IMR-90 (cell line): ENCODE measurements at regions of chr16 and their contacts with region 1.

Region 1: DNA sequence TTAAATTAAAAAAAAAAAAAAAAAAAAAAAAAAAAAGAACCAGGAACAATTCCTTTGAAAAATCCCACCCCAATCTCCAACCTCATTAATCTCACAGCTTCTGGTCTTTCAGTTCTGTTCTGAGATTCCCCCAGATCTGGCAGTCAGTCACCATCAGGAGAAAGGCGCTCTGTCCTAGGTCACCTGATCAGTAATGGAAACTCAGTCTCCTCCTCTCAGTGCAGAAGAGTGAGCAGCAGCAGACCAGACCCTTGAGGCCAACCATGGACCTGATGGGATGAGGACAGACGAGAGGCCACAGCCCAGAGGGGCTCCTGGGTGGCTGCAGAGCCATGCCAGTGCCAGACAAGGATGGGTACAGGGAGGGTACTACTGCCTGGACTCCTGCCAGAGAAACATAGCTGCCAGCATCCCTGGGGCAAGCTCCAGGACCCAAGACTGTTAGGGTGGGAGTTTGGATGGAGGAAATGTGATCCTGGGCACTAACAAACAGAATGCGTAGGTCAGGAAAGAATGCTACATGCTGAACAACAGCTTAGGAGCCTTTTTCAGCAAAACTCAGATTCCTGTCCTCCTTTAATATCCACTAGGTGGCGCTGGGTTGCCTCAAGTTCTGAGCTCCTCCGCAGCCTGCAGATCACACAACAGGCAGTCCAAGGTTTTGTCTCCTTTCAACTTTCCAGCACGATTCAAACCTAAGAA is 28.7 kb downstream of the MPG start:
- DNase-seq: peak; percentile 84
- ATAC-seq: peak; percentile 95
- H3K4me3 ChIP-seq: no peak overlapping the region
- H3K27ac ChIP-seq: no peak overlapping the region
- H3K4me1 ChIP-seq: no peaks in the 10 kb centered on the region
- H3K27me3 ChIP-seq: no peaks in the 10 kb centered on the region
- CTCF ChIP-seq: peak; percentile 88
- POLR2A ChIP-seq: no peak
- RAD21 ChIP-seq: peak; percentile 87

Region 2: DNA sequence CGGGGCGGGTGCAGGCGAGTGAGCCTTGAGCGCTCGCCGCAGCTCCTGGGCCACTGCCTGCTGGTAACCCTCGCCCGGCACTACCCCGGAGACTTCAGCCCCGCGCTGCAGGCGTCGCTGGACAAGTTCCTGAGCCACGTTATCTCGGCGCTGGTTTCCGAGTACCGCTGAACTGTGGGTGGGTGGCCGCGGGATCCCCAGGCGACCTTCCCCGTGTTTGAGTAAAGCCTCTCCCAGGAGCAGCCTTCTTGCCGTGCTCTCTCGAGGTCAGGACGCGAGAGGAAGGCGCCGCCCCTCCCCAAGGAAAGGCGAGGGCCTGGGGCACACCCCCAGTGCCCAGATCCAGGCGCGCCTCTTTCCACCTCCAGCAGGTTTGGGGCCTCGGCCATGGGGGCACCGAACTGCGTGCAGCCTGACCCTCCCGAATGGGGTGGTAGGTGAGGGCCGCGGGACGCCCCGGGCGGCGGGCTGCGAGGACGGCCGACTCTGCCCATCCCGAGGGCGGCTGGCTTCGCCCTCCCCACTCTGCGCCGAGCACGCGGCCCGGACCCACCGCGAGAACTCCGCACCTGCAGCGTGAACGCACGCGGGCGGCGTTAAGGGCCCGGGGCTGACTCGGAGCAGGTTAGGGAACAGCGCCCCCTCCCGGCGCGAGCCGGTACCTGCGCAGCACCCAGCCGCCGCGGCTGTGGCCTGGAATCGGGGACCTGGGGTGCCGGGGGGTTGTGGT is 74.3 kb after region 1 on chr16:
- CTCF ChIA-PET with region 1: interaction called, 11 read pairs
- POLR2A ChIA-PET with region 1: no interaction called
- dilution Hi-C with region 1: no loop called
- in situ Hi-C with region 1: loop called (anchors 5 kb)
- intact Hi-C with region 1: loop called (anchors 1 kb)
- DNase-seq: peak; percentile 58
- ATAC-seq: peak; percentile 79
- H3K4me3 ChIP-seq: peak overlapping the region; percentile 8
- H3K27ac ChIP-seq: no peak overlapping the region
- H3K4me1 ChIP-seq: peaks cover 5% of the 10 kb centered on the region; the same call in 1 of the 2 replicates
- H3K27me3 ChIP-seq: peaks cover 25% of the 10 kb centered on the region
- CTCF ChIP-seq: peak; percentile 90
- POLR2A ChIP-seq: no peak
- RAD21 ChIP-seq: peak; percentile 80

Region 3: GRCh38 chr16:361872-362701 is 255.3 kb after region 1 on chr16:
- CTCF ChIA-PET with region 1: interaction called, 10 read pairs
- POLR2A ChIA-PET with region 1: no interaction called
- dilution Hi-C with region 1: no loop called
- in situ Hi-C with region 1: no loop called
- intact Hi-C with region 1: no loop called
- DNase-seq: peak; percentile 61
- ATAC-seq: peak; percentile 84
- H3K4me3 ChIP-seq: no peak overlapping the region
- H3K27ac ChIP-seq: no peak overlapping the region
- H3K4me1 ChIP-seq: no peaks in the 10 kb centered on the region
- H3K27me3 ChIP-seq: no peaks in the 10 kb centered on the region
- CTCF ChIP-seq: peak; percentile 77
- POLR2A ChIP-seq: no peak
- RAD21 ChIP-seq: peak; percentile 89